IMR-90 (cell line): ENCODE measurements at regions of chr11 and their contacts with region 1.

Region 1: GRCh38 chr11:123166071-123166559 is 28.9 kb downstream of the CLMP start:
- DNase-seq: peak; percentile 97
- ATAC-seq: peak; percentile 89
- H3K4me3 ChIP-seq: no peak overlapping the region
- H3K27ac ChIP-seq: peak overlapping the region; percentile 89
- H3K4me1 ChIP-seq: peaks cover 39% of the 10 kb centered on the region
- H3K27me3 ChIP-seq: no peaks in the 10 kb centered on the region
- CTCF ChIP-seq: peak; percentile 62
- POLR2A ChIP-seq: no peak
- RAD21 ChIP-seq: peak; percentile 60

Region 2: DNA sequence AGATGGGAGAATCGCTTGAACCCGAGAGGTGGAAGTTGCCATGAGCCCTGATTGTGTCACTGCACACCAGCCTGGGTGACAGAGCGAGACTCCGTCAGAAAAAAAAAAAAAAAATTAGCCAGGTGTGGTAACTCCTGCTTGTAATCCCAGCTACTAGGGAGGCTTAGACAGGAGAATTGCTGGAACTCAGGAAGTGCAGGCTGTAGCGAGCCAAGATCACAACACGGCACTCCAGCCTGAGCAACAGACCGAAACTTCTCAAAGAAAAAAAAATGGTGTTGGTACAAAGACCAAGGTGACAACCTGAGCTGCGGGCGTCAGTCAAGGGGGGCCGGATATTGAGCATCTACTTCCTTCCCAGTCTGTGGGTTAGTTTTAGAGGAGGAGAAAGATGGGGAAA is 55.8 kb before region 1 on chr11:
- CTCF ChIA-PET with region 1: interaction called, 10 read pairs
- POLR2A ChIA-PET with region 1: no interaction called
- dilution Hi-C with region 1: no loop called
- in situ Hi-C with region 1: no loop called
- intact Hi-C with region 1: loop called (anchors 2 kb)
- DNase-seq: no peak
- ATAC-seq: no peak
- H3K4me3 ChIP-seq: no peak overlapping the region
- H3K27ac ChIP-seq: no peak overlapping the region
- H3K4me1 ChIP-seq: peaks cover 13% of the 10 kb centered on the region
- H3K27me3 ChIP-seq: no peaks in the 10 kb centered on the region
- CTCF ChIP-seq: no peak
- POLR2A ChIP-seq: no peak
- RAD21 ChIP-seq: no peak

Region 3: DNA sequence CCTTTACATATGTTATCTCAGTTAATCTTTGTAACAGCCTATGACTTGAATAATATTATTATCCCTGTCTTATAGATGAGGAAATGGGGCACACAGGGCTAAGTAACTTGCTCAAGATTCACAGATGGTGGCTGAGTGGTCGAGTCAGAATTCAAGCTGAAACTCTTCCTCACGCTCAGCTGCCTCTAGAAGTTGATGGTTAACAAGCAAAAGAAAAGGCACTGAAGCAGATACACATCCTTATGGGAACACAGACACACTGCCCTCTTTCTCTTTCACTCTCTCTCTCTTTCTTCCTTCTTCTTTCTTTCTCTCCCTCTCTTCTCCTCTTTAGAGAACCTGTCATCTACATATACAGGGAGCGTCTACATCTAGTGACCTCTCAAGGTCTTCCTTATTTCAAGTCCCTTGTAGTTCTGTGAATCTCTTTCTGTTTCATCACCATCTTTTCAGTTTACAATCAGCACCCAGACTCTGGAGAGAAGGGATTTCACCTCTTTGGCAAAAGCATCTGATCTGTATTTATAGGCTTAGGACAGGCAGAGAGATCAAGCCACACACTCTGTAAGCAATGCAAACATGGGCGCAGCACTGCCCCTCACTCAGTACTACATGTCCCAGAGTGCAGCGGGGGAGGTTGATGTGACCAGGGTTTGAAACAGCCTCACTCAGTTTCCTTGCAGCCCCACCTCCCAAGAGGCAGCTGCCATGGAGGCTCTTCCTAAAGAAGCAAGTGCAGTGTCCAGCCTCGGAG is 339.6 kb after region 1 on chr11:
- CTCF ChIA-PET with region 1: no interaction called
- POLR2A ChIA-PET with region 1: no interaction called
- dilution Hi-C with region 1: no loop called
- in situ Hi-C with region 1: no loop called
- intact Hi-C with region 1: no loop called
- DNase-seq: no peak
- ATAC-seq: 0 out of 2 replicates have a peak, but pooled peaks have one; percentile 12
- H3K4me3 ChIP-seq: no peak overlapping the region
- H3K27ac ChIP-seq: no peak overlapping the region
- H3K4me1 ChIP-seq: peaks cover 6% of the 10 kb centered on the region; the same call in 1 of the 2 replicates
- H3K27me3 ChIP-seq: no peaks in the 10 kb centered on the region
- CTCF ChIP-seq: no peak
- POLR2A ChIP-seq: no peak
- RAD21 ChIP-seq: no peak